PC-3 (cell line): ENCODE measurements at regions of chr1 and their contacts with region 1.

Region 1: GRCh38 chr1:229227298-229227919 is 43.5 kb upstream of the RAB4A start:
- DNase-seq: peak; percentile 83
- ATAC-seq: peak; percentile 40
- H3K4me3 ChIP-seq: no peak overlapping the region
- H3K27ac ChIP-seq: no peak overlapping the region
- H3K4me1 ChIP-seq: peaks cover 58% of the 10 kb centered on the region
- H3K27me3 ChIP-seq: no peaks in the 10 kb centered on the region
- CTCF ChIP-seq: peak; percentile 99

Region 2: DNA sequence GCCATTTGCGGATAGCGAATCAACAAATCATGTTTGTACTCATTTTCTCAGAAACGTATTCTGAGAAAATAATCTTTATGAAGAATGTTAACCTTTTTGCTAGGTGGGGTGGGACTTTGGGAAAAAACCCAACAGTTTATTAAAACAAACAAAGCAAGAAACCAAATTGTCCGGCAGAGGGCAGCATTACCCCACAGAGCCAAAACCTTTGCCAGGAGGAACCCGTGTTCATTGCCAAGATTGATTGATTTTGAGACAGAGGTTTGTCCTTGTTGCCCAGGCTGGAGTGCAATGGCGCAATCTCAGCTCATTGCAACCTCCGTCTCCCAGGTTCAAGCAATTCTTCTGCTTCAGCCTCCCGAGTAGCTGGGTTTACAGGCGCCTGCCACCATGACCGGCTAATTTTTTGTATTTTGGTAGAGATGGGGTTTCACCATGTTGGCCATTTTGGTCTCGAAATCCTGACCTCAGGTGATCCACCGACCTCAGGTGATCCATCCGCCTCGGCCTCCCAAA is 563.0 kb before region 1 on chr1:
- CTCF ChIA-PET with region 1: no interaction called
- POLR2A ChIA-PET with region 1: no interaction called
- intact Hi-C with region 1: loop called (anchors 1 kb)
- DNase-seq: peak; percentile 92
- ATAC-seq: peak; percentile 64
- H3K4me3 ChIP-seq: peak overlapping the region; percentile 40
- H3K27ac ChIP-seq: no peak overlapping the region
- H3K4me1 ChIP-seq: peaks cover 4% of the 10 kb centered on the region; the same call in 1 of the 2 replicates
- H3K27me3 ChIP-seq: no peaks in the 10 kb centered on the region
- CTCF ChIP-seq: peak; percentile 89

Region 3: DNA sequence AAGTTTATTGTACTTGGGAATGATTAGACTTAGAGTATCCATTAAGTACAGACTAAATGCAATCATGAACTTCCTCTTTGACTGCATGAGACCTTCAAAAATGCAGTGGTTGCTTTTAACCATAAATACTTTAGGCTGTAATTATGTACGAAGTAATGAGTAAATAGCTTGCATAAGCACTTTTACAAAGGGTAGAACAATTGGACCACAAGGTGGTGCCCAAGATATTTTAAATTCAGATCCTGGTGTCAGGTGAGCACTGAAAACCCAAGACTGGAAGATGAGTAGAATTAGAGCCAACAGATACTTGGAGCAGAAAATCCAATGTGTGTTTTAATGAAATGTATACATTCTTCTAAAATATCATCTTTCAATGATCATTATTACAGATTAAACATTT is 535.5 kb before region 1 on chr1:
- CTCF ChIA-PET with region 1: interaction called, 6 read pairs
- POLR2A ChIA-PET with region 1: no interaction called
- intact Hi-C with region 1: loop called (anchors 1 kb)
- DNase-seq: peak; percentile 86
- ATAC-seq: peak; percentile 89
- H3K4me3 ChIP-seq: no peak overlapping the region
- H3K27ac ChIP-seq: no peak overlapping the region
- H3K4me1 ChIP-seq: no peaks in the 10 kb centered on the region
- H3K27me3 ChIP-seq: no peaks in the 10 kb centered on the region
- CTCF ChIP-seq: peak; percentile 88

Region 4: DNA sequence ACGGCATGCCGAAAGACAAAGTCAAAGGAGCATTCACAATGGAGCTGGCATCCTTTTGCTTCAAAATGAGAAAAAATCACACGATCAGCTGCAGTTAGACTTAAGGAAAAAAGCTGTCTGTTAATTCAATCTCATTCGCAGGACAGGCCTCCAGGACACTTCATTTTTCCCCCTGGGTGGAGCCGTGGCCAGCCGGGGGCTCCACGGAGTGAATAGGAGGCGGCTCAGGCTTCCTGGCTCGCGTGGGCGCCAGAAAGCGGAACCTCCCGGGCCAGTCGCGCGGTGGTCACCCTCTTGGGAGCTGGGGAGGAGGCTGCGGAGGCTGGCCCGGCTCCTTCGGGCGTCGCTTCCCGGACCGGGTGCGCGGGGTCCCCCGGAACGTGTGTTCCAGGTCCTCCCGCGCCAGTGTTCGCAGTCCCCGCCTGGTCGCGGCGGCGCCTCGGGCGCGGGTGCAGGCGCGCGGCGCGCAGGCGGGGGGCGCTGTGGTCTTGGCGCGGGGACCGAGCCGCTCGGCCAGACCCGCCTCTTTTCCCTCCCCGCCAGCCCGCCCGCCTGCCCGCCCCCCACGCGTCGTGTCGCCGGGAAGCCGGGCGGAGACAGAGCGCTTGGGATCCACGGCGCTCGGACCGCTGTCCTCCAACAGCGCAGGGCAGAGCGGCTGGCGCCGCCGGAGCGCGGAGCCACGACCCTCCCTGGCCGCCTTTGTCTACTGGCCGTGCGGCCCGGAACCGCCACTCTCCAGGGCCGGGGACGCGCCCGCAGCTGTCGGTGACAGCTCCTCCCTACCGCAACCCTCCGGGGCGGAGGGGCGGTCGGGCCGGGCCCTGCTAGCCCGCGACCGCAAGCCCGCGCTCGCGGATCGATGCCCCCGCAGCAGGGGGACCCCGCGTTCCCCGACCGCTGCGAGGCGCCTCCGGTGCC is 492.3 kb before region 1 on chr1 and contains the start of gene RHOU:
- CTCF ChIA-PET with region 1: no interaction called
- POLR2A ChIA-PET with region 1: no interaction called
- intact Hi-C with region 1: loop called (anchors 2 kb)
- DNase-seq: peak; percentile 34
- ATAC-seq: peak; percentile 81
- H3K4me3 ChIP-seq: peak within 1 kb of the TSS; percentile 66
- H3K27ac ChIP-seq: no peak within 1 kb of the TSS
- H3K4me1 ChIP-seq: peaks cover 11% of the 10 kb centered on the region
- H3K27me3 ChIP-seq: peaks cover 91% of the 10 kb centered on the region
- CTCF ChIP-seq: peak; percentile 49; the same call in 1 of the 2 replicates
- total RNA-seq, gene RHOU: 0.17 and 0.26 TPM in 2 replicates

Region 5: GRCh38 chr1:228837817-228838716 is 389.3 kb before region 1 on chr1:
- CTCF ChIA-PET with region 1: no interaction called
- POLR2A ChIA-PET with region 1: no interaction called
- intact Hi-C with region 1: loop called (anchors 5 kb)
- DNase-seq: peak; percentile 99
- ATAC-seq: peak; percentile 82
- H3K4me3 ChIP-seq: peak overlapping the region; percentile 10; the same call in 1 of the 2 replicates
- H3K27ac ChIP-seq: peak overlapping the region; percentile 65
- H3K4me1 ChIP-seq: peaks cover 51% of the 10 kb centered on the region
- H3K27me3 ChIP-seq: peaks cover 18% of the 10 kb centered on the region; the same call in 1 of the 2 replicates
- CTCF ChIP-seq: no peak

Region 6: DNA sequence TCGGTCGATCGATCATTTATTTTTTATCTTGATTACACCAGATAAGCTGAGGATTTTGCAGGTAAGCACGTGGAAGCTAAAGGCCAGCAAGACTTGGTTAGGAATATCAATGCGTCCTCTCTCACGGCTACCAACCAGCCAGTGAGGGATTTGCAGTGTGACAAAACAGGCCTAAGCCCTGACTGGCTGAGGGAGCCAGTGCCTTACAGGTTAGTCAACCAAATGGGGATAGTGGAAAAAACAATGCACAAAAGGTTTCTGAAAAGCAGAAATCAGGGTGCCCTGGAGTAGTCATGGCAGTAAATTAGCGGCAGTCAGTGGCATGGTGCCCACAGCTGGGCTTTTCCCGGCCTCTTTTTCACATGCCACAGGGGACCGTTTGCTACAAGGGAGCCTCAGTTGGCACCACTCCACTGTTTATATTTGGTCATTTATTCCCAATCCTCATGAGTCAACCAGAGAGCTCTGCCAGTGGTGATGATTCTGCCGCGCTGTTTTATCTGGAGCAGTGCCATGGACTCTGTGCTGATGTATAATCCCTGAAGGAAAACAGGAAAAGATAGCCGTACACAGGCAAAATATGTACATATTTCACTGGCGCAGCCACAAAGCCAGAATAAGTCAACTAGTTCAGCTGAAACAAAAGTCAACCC is 324.5 kb before region 1 on chr1:
- CTCF ChIA-PET with region 1: no interaction called
- POLR2A ChIA-PET with region 1: no interaction called
- intact Hi-C with region 1: loop called (anchors 2 kb)
- DNase-seq: peak; percentile 99
- ATAC-seq: peak; percentile 93
- H3K4me3 ChIP-seq: no peak overlapping the region
- H3K27ac ChIP-seq: no peak overlapping the region
- H3K4me1 ChIP-seq: peaks cover 14% of the 10 kb centered on the region
- H3K27me3 ChIP-seq: peaks cover 66% of the 10 kb centered on the region
- CTCF ChIP-seq: no peak

Region 7: DNA sequence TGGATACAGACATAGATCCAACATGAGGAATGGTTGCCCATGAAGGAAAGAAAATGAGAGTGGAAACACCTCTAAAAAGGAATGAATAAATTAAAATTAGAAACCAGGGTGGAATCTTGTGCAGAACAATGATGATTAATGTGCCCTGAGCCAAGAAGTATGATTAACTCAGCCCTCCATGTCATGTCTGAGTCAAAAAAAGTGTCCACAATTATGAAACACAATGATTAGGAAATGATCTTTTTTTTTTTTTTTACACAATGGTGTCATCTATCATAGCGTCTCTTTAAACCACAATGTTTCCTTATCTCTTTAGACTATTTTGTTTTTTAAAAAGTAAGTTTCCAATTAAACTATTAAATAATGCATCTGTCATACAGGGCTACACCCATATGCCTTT is 35.4 kb before region 1 on chr1:
- CTCF ChIA-PET with region 1: no interaction called
- POLR2A ChIA-PET with region 1: no interaction called
- intact Hi-C with region 1: no loop called
- DNase-seq: peak; percentile 68
- ATAC-seq: no peak; the same call in 1 of the 2 replicates
- H3K4me3 ChIP-seq: no peak overlapping the region
- H3K27ac ChIP-seq: peak overlapping the region; percentile 1; the same call in 1 of the 2 replicates
- H3K4me1 ChIP-seq: peaks cover 18% of the 10 kb centered on the region
- H3K27me3 ChIP-seq: no peaks in the 10 kb centered on the region
- CTCF ChIP-seq: no peak

Region 8: GRCh38 chr1:229203030-229203751 is 24.2 kb before region 1 on chr1:
- CTCF ChIA-PET with region 1: no interaction called
- POLR2A ChIA-PET with region 1: no interaction called
- intact Hi-C with region 1: no loop called
- DNase-seq: peak; percentile 31
- ATAC-seq: no peak
- H3K4me3 ChIP-seq: no peak overlapping the region
- H3K27ac ChIP-seq: no peak overlapping the region
- H3K4me1 ChIP-seq: peaks cover 18% of the 10 kb centered on the region
- H3K27me3 ChIP-seq: peaks cover 3% of the 10 kb centered on the region; the same call in 1 of the 2 replicates
- CTCF ChIP-seq: no peak